Gastrocnemius medialis (tissue), 4 donors: ENCODE measurements at regions of chr2 and their contacts with region 1.

Region 1: DNA sequence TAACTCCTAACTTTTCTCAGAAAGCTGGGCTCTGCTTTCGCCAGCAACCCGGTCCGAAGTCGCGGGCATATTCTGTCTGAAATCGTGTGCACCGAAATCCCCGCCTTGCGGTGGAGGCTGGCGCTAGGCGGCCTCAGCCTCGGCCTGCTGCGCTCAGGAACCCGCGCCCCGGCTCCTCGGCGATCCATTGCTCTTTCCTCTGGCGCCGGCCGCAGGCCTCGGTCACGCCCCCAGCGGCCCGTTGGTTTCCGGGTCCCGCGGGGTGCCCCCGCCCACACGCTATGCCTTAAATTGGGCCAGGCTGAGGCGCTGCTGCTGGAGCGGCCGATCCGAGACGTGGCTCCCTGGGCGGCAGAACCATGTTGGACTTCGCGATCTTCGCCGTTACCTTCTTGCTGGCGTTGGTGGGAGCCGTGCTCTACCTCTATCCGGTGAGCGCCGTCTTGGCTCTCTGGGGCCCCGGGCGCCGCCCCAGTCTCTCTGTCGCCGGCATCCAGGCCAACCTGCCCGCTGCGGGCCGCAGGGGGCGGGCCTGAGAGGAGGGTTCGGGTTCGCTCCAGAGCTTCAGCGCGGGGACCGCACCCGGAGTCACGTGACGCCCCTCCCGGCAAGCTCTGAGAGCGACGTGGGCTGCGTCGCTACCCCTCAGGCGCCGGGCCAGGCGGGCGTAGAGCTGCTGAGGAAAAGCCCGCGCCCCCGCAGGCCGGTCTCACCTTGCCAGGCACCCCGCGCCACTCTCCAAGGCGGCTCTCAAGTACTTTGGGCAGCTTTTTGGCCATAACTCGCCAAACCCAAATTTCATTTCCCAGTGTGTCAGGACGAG is at the start of gene CYP20A1:
- DNase-seq: peak; percentile 90 to 94
- ATAC-seq: peak; percentile 96
- H3K4me3 ChIP-seq: peak within 1 kb of the TSS; percentile 79 to 97 (median 81)
- H3K27ac ChIP-seq: peak within 1 kb of the TSS; percentile 92 to 99 (median 96)
- H3K4me1 ChIP-seq: peaks cover 12 to 16% of the 10 kb centered on the region in 2 donors
- H3K27me3 ChIP-seq: no peaks in the 10 kb centered on the region
- CTCF ChIP-seq: peak in 4 of 5 experiments; percentile 41 to 55 (median 52)
- POLR2A ChIP-seq: peak; percentile 84 to 88
- total RNA-seq, gene CYP20A1: 12.4 to 24.4 (median 17.7) TPM

Region 2: GRCh38 chr2:202911512-202912341 is 327.2 kb before region 1 on chr2 and contains the starts of genes CARF and WDR12:
- in situ Hi-C with region 1: loop called in 1 of 4 experiments (anchors 10 kb)
- intact Hi-C with region 1: loop called (anchors 5 kb)
- DNase-seq: peak; percentile 87 to 88
- ATAC-seq: peak; percentile 94 to 96
- H3K4me3 ChIP-seq: peak within 1 kb of the TSS; percentile 83 to 100 (median 92)
- H3K27ac ChIP-seq: peak within 1 kb of the TSS; percentile 90 to 99 (median 94)
- H3K4me1 ChIP-seq: peaks cover 25 to 27% of the 10 kb centered on the region in 2 donors
- H3K27me3 ChIP-seq: no peaks in the 10 kb centered on the region
- CTCF ChIP-seq: no peak
- POLR2A ChIP-seq: peak; percentile 41 to 56
- total RNA-seq, gene CARF: 2.2 to 12.2 (median 4.0) TPM
- total RNA-seq, gene WDR12: 5.3 to 83.2 (median 18.7) TPM

Region 3: GRCh38 chr2:203014456-203015199 is 224.3 kb before region 1 on chr2 and contains the start of gene NBEAL1:
- in situ Hi-C with region 1: no loop called
- intact Hi-C with region 1: loop called (anchors 1 kb)
- DNase-seq: peak; percentile 97 to 98
- ATAC-seq: peak; percentile 94 to 97
- H3K4me3 ChIP-seq: peak within 1 kb of the TSS; percentile 70 to 88 (median 78)
- H3K27ac ChIP-seq: peak within 1 kb of the TSS; percentile 90 to 96 (median 94)
- H3K4me1 ChIP-seq: peaks cover 36 to 42% of the 10 kb centered on the region in 2 donors
- H3K27me3 ChIP-seq: no peaks in the 10 kb centered on the region
- CTCF ChIP-seq: no peak
- POLR2A ChIP-seq: peak; percentile 76 to 86
- total RNA-seq, gene NBEAL1: 9.8 to 21.9 (median 11.3) TPM

Region 4: GRCh38 chr2:203327901-203328759 is 89.2 kb after region 1 on chr2 and contains the start of gene ABI2:
- in situ Hi-C with region 1: no loop called
- intact Hi-C with region 1: loop called (anchors 1 kb)
- DNase-seq: peak; percentile 39 to 60
- ATAC-seq: peak; percentile 84 to 87
- H3K4me3 ChIP-seq: peak within 1 kb of the TSS; percentile 82 to 95 (median 91)
- H3K27ac ChIP-seq: peak within 1 kb of the TSS; percentile 64 to 80 (median 76)
- H3K4me1 ChIP-seq: peaks cover 6 to 11% of the 10 kb centered on the region in 2 donors
- H3K27me3 ChIP-seq: no peaks in the 10 kb centered on the region
- CTCF ChIP-seq: no peak
- POLR2A ChIP-seq: peak; percentile 30 to 50
- total RNA-seq, gene ABI2: 6.2 to 17.0 (median 12.9) TPM

Region 5: DNA sequence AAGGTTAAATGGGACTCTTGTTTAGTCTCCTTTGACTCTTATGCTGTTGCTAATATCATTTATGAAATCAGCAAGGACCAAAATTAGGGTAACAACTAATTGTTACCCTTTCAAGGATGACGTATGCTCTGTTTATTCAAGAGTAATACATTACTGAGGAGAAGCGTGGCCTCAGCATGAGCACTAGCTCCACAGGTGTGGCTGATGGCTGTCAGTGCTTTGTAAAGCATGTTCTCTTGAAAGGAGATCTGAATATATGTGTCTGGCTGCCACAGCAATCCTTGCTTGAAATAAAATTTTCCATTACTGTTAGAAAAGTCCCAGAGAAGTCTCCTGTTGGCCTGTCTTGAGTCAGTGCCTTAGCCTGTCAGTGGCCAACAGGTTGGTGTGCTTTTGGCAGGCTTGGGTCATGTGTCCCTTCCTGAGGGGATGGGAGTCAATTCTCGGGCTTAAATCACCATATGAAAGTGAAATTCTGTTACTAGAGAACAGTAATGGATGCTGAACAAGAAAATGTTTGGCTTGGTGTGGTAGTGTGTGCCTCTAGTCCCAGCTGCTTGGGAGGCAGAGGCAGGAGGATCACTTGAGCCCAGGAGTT is 122.0 kb after region 1 on chr2:
- in situ Hi-C with region 1: no loop called
- intact Hi-C with region 1: no loop called
- DNase-seq: no peak
- ATAC-seq: no peak
- H3K4me3 ChIP-seq: no peak overlapping the region
- H3K27ac ChIP-seq: no peak overlapping the region
- H3K4me1 ChIP-seq: peaks cover 0 to 9% of the 10 kb centered on the region in 2 donors
- H3K27me3 ChIP-seq: no peaks in the 10 kb centered on the region
- CTCF ChIP-seq: no peak
- POLR2A ChIP-seq: no peak